Breast epithelium (tissue), 4 donors: ENCODE measurements at regions of chr9 and their contacts with region 1.

Region 1: GRCh38 chr9:35096035-35096849 is at the start of gene PIGO:
- DNase-seq: peak; percentile 84 to 88
- H3K4me3 ChIP-seq: peak within 1 kb of the TSS; percentile 73 to 92 (median 88)
- H3K27ac ChIP-seq: peak within 1 kb of the TSS; percentile 97 to 98
- H3K4me1 ChIP-seq: peaks cover 0 to 12% of the 10 kb centered on the region in 2 donors
- H3K27me3 ChIP-seq: no peaks in the 10 kb centered on the region
- CTCF ChIP-seq: peak; percentile 69 to 88 (median 78)
- POLR2A ChIP-seq: peak; percentile 36
- total RNA-seq, gene PIGO: 15.4 to 24.9 (median 18.0) TPM

Region 2: DNA sequence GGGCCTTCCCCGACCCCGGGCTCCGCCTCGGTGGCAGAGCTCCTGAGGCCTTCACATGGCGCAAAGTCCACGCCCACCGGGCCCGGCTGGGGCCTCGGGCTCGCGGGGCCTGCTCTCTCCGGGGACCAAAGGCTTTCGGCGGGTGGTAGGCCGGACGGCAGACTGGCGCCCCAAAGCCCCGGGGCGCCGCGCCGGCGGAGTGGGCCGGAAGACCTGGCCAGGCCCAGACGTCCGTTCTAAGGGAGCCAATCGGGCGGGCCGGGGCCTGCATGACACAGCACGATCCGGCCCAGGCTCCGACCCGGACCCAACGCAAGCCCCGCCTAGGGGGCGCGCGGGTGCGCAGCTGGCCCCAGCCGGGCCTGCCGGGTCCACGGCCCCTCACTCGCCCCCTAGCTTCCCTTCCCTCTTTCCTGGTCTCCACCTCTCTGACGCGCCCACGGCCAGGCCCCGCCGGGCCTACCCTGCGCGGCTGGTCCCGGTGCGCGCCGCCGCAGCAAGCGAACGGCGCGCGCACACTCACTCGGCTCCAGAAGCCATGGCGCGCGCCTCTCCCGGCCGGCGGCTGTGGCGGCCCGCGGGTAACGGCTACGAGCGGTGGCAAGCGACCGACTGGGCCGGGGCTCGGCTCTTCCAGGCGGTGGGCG is 24.3 kb before region 1 on chr9:
- intact Hi-C with region 1: loop called (anchors 2 kb)
- DNase-seq: peak; percentile 76 to 78
- H3K4me3 ChIP-seq: peak overlapping the region; percentile 97 to 98 (median 98)
- H3K27ac ChIP-seq: peak overlapping the region; percentile 100
- H3K4me1 ChIP-seq: peaks cover 8 to 12% of the 10 kb centered on the region in 2 donors
- H3K27me3 ChIP-seq: no peaks in the 10 kb centered on the region
- CTCF ChIP-seq: peak in 1 of 3 donors; percentile 34
- POLR2A ChIP-seq: no peak

Region 3: DNA sequence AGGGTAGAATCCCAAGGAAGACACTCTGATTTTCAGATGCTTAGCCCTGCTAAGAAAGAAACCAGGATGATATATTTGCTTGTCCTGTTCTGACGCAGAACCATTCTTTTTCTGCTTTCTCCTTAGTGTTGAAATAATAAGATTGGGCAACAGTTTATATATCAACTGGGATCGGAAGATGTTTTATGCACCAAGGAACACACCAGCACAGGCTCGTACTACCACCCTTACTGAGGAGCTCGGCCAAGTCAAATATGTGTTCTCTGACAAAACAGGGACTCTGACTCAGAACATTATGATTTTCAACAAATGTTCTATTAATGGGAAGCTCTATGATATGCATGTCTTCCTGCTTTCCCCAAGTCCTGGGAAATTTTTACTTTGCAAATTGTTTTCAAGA is 374.7 kb after region 1 on chr9:
- intact Hi-C with region 1: loop called (anchors 10 kb)
- DNase-seq: no peak
- H3K4me3 ChIP-seq: no peak overlapping the region
- H3K27ac ChIP-seq: no peak overlapping the region
- H3K4me1 ChIP-seq: no peaks in the 10 kb centered on the region
- H3K27me3 ChIP-seq: no peaks in the 10 kb centered on the region
- CTCF ChIP-seq: no peak
- POLR2A ChIP-seq: no peak